Dendritic cell treated with granulocyte-macrophage colony-stimulating factor and Interleukin-4, amounts not matched to agents 40 ng/mL and 50 ng/mL, for 4 days (primary cell): ENCODE measurements at regions of chr6 and their contacts with region 1.

Region 1: DNA sequence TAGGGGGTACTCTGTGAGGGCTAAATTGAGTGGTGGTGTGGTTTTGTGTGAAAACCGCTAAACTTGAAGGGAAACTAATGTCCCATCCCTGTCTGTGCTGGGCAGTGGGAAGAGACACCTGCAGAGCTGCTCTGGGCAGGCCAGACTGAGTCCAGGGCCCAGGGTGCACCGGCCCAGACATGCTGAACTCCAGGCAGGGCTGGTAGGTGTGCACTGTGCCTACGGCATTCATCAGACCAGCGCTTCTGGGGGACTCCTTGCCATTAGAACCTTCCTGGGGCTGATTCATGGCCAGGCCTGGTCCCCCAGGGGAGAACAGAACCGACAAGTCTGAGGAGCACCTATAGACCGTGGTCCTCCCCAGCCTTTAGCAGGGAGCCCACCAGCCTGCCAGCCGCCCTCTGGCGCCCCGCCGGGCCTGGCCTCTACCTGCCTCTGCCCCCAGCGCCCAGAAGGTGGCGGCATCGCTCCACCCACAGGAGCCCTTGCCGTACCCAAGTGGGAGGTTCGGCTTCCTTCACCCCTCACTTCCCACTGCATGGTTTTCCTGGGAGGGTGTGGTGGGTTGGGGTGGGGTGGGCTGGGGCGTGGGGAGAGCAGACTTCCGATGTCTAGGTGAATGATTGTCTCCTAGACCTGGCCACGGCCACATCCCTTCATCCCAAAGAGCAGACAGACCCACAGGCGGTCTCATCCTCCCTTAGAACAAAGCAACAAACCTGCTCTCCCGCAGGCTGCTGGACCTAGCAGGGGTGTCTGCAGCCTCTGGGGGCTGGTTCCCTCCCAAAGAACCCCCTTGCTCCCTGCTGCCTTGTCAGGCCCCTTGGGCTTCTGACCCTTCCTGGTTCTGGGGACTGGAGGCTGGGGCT is 15.5 kb downstream of the CCDC167 start:
- H3K4me3 Mint-ChIP-seq: no peak overlapping the region
- H3K27ac Mint-ChIP-seq: no peak overlapping the region
- H3K4me1 Mint-ChIP-seq: no peaks in the 10 kb centered on the region
- H3K27me3 Mint-ChIP-seq: no peaks in the 10 kb centered on the region

Region 2: GRCh38 chr6:37566111-37566949 is 82.2 kb after region 1 on chr6:
- intact Hi-C with region 1: loop called (anchors 1 kb)
- H3K4me3 Mint-ChIP-seq: no peak overlapping the region
- H3K27ac Mint-ChIP-seq: no peak overlapping the region
- H3K4me1 Mint-ChIP-seq: peaks cover 5% of the 10 kb centered on the region
- H3K27me3 Mint-ChIP-seq: peaks cover 58% of the 10 kb centered on the region

Region 3: GRCh38 chr6:37653933-37654565 is 169.9 kb after region 1 on chr6:
- intact Hi-C with region 1: loop called (anchors 5 kb)
- H3K4me3 Mint-ChIP-seq: no peak overlapping the region
- H3K27ac Mint-ChIP-seq: no peak overlapping the region
- H3K4me1 Mint-ChIP-seq: no peaks in the 10 kb centered on the region
- H3K27me3 Mint-ChIP-seq: peaks cover 50% of the 10 kb centered on the region

Region 4: GRCh38 chr6:37691904-37692806 is 208.0 kb after region 1 on chr6:
- intact Hi-C with region 1: loop called (anchors 1 kb)
- H3K4me3 Mint-ChIP-seq: no peak overlapping the region
- H3K27ac Mint-ChIP-seq: no peak overlapping the region
- H3K4me1 Mint-ChIP-seq: peaks cover 19% of the 10 kb centered on the region
- H3K27me3 Mint-ChIP-seq: peaks cover 72% of the 10 kb centered on the region

Region 5: GRCh38 chr6:38493931-38494547 is 1009.9 kb after region 1 on chr6:
- intact Hi-C with region 1: loop called (anchors 10 kb)
- H3K4me3 Mint-ChIP-seq: no peak overlapping the region
- H3K27ac Mint-ChIP-seq: no peak overlapping the region
- H3K4me1 Mint-ChIP-seq: no peaks in the 10 kb centered on the region
- H3K27me3 Mint-ChIP-seq: no peaks in the 10 kb centered on the region